Gastrocnemius medialis (tissue), 4 donors: ENCODE measurements at regions of chr15 and their contacts with region 1.

Region 1: GRCh38 chr15:75335705-75336355 is at the start of gene COMMD4:
- DNase-seq: peak; percentile 92 to 95
- ATAC-seq: peak; percentile 93 to 97
- H3K4me3 ChIP-seq: peak within 1 kb of the TSS; percentile 74 to 89 (median 86)
- H3K27ac ChIP-seq: peak within 1 kb of the TSS; percentile 59 to 81 (median 72)
- H3K4me1 ChIP-seq: peaks cover 13 to 18% of the 10 kb centered on the region in 2 donors
- H3K27me3 ChIP-seq: no peaks in the 10 kb centered on the region
- CTCF ChIP-seq: peak in 1 of 5 experiments; percentile 41
- POLR2A ChIP-seq: no peak
- total RNA-seq, gene COMMD4: 17.9 to 37.5 (median 28.2) TPM

Region 2: GRCh38 chr15:75023181-75023871 is 312.5 kb before region 1 on chr15 and contains the start of gene PPCDC:
- in situ Hi-C with region 1: no loop called
- intact Hi-C with region 1: loop called (anchors 1 kb)
- DNase-seq: peak; percentile 95
- ATAC-seq: peak; percentile 97 to 98
- H3K4me3 ChIP-seq: peak within 1 kb of the TSS; percentile 80 to 92 (median 84)
- H3K27ac ChIP-seq: peak within 1 kb of the TSS; percentile 88 to 96 (median 90)
- H3K4me1 ChIP-seq: peaks cover 0 to 14% of the 10 kb centered on the region in 2 donors
- H3K27me3 ChIP-seq: no peaks in the 10 kb centered on the region
- CTCF ChIP-seq: no peak
- POLR2A ChIP-seq: peak; percentile 82 to 87
- total RNA-seq, gene PPCDC: 5.5 to 20.2 (median 11.9) TPM

Region 3: GRCh38 chr15:75347879-75348561 is 12.2 kb after region 1 on chr15:
- in situ Hi-C with region 1: no loop called
- intact Hi-C with region 1: loop called (anchors 1 kb)
- DNase-seq: no peak
- ATAC-seq: peak; percentile 32 to 42
- H3K4me3 ChIP-seq: peak overlapping the region; percentile 73 to 95 (median 92)
- H3K27ac ChIP-seq: peak overlapping the region; percentile 60 to 85 (median 78)
- H3K4me1 ChIP-seq: peaks cover 7 to 14% of the 10 kb centered on the region in 2 donors
- H3K27me3 ChIP-seq: no peaks in the 10 kb centered on the region
- CTCF ChIP-seq: no peak
- POLR2A ChIP-seq: no peak

Region 4: DNA sequence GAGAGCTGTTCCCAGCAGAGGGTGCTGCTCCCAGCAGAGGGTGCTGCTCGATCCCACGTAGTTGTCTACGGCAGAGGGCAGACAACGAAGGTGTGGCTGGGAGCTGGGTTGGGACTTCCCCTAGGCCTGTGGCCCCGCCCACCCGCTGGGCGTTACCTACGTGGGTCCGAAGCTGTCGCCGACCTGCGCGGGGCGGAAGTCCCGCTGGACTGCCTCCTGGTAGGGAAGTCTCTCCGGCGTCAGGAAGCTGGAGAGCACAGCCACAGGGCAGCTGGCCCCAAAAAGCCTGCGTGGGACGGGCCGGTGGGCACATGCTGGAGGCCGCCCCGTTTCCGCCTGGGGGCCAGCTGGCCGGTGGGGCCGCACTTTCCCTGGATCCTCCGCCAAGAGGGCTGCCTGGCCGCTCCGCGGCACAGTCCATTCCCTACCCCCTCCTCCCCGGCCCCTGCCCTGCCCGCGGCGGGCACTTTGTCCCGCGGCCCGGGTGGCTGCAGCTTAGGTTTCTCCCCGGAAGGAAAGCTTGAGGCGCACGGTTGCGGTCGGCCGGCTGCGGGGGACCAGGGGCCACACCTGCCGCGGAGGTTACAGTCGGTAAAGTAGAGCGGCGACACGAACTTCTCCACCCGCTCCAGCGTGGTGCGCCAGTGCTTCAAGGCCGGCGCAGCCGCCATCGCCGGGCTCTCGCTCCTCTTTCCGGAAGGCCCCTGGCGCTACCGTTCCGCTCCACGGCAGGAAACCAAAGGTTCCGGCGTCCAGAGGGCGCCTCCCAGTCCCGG is 32.3 kb after region 1 on chr15 and contains the start of gene MAN2C1:
- in situ Hi-C with region 1: no loop called
- intact Hi-C with region 1: loop called (anchors 1 kb)
- DNase-seq: peak; percentile 92 to 97
- ATAC-seq: peak; percentile 89 to 93
- H3K4me3 ChIP-seq: peak within 1 kb of the TSS; percentile 87 to 99 (median 96)
- H3K27ac ChIP-seq: peak within 1 kb of the TSS; percentile 96 to 100 (median 98)
- H3K4me1 ChIP-seq: peaks cover 18 to 19% of the 10 kb centered on the region in 2 donors
- H3K27me3 ChIP-seq: no peaks in the 10 kb centered on the region
- CTCF ChIP-seq: peak in 3 of 5 experiments; percentile 72 to 81 (median 80)
- POLR2A ChIP-seq: peak; percentile 86 to 89
- total RNA-seq, gene MAN2C1: 38.9 to 116 (median 62.8) TPM

Region 5: GRCh38 chr15:75420698-75421097 is 84.9 kb after region 1 on chr15:
- in situ Hi-C with region 1: no loop called
- intact Hi-C with region 1: no loop called
- DNase-seq: no peak
- ATAC-seq: no peak
- H3K4me3 ChIP-seq: no peak overlapping the region
- H3K27ac ChIP-seq: no peak overlapping the region
- H3K4me1 ChIP-seq: no peaks in the 10 kb centered on the region
- H3K27me3 ChIP-seq: no peaks in the 10 kb centered on the region
- CTCF ChIP-seq: no peak
- POLR2A ChIP-seq: no peak

Region 6: DNA sequence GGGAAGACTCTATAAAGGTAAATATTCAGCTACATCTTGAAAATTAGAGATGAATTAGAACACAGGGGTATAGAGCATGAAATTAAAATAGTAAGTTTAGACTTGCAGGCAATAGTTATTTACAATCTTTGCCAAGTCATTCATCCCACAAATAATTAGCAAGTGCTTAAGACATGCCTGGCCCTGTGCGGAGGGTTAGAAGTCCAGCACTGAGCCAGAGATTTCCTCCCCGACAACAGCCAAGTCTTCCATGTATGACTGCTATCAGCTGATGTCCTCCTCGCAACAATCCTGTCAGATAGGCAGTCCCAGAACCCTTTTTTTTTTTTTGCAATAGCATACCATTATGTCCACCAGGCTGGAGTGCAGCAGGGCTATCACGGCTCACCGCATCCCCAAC is 101.0 kb after region 1 on chr15:
- in situ Hi-C with region 1: no loop called
- intact Hi-C with region 1: no loop called
- DNase-seq: no peak
- ATAC-seq: no peak
- H3K4me3 ChIP-seq: no peak overlapping the region
- H3K27ac ChIP-seq: no peak overlapping the region
- H3K4me1 ChIP-seq: peaks cover 4 to 11% of the 10 kb centered on the region in 2 donors
- H3K27me3 ChIP-seq: no peaks in the 10 kb centered on the region
- CTCF ChIP-seq: no peak
- POLR2A ChIP-seq: no peak